ENCODE measurements at regions of chr5 and their contacts with region 1.

Region 1: DNA sequence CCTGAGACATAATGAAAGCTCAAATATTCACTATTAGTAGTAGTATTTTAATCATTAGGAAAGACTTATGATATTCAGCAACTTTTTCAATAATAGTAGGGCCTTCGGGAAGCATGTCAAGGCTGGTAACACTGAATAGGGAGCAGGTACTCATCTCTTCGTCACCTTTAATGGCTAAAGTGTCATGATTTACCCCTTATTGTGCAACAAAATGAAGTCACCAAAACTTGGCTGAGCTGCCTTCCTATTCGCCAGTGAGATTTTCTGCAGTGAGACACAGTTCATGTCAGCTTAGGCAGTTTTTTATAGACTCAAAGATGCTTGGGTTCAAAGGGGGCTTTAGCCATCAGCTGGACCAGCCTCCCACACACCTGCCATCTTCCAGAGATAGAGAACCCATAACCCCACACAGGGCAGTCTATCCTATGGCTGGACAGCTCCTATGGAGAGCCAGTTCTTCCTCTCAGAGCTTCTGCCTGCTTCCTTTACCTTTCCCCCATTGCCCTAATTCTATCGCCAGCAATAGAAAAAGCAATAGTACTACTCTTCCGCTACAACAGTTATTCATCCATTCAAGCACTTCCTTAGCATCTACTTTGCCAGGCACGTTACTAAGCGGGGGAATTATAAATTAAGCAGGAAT is 2.3 kb upstream of the CPLX2 start:
- DNase-seq: no peak
- H3K4me3 ChIP-seq: no peak overlapping the region
- H3K27ac ChIP-seq: no peak overlapping the region
- H3K4me1 ChIP-seq: no peaks in the 10 kb centered on the region
- H3K27me3 ChIP-seq: peaks cover 2 to 54% of the 10 kb centered on the region in 2 donors
- CTCF ChIP-seq: no peak
- POLR2A ChIP-seq: no peak

Region 2: GRCh38 chr5:175889910-175890684 is 21.0 kb after region 1 on chr5:
- intact Hi-C with region 1: loop called (anchors 1 kb)
- DNase-seq: no peak
- H3K4me3 ChIP-seq: no peak overlapping the region
- H3K27ac ChIP-seq: no peak overlapping the region
- H3K4me1 ChIP-seq: no peaks in the 10 kb centered on the region
- H3K27me3 ChIP-seq: no peaks in the 10 kb centered on the region
- CTCF ChIP-seq: no peak
- POLR2A ChIP-seq: no peak

Region 3: DNA sequence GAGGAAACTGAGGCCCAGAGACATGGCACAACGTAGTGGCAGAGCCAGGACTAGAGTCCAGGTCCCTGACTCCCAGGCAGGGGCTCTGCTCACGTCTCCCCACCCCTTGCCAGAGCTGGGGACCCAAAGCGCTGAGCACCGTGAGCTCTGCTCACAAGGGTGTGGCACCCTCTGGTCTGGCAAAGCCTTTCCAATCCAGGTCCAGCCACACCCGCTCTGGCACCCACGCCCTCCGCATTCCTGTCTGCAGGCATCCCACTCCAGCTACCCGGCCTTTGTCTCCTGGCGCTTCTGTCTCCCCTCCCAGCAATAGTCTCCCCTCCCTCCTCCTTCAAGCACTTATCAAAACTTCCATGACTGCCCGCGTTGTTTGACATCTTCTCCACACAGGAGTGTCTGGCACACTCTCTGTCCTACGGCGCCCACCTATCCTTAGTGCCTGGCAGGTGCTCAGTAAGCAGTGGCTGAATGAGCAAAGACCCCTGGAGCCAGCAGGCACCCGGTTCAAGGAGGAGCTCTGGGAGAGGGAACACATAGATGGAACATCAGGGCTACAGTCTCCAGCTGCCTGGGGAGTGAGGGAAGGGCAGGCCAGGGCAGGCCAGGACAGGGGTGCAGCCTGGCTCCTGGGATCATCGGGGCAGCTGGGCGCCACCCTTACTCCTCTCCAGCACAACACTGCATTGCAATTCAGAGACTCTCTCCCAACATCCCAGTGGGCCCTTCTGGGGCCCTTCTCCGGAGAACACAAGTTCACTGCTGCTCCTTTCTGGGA is 531.5 kb after region 1 on chr5:
- intact Hi-C with region 1: no loop called
- DNase-seq: no peak
- H3K4me3 ChIP-seq: no peak overlapping the region
- H3K27ac ChIP-seq: no peak overlapping the region
- H3K4me1 ChIP-seq: no peaks in the 10 kb centered on the region
- H3K27me3 ChIP-seq: no peaks in the 10 kb centered on the region
- CTCF ChIP-seq: no peak
- POLR2A ChIP-seq: no peak

Region 4: DNA sequence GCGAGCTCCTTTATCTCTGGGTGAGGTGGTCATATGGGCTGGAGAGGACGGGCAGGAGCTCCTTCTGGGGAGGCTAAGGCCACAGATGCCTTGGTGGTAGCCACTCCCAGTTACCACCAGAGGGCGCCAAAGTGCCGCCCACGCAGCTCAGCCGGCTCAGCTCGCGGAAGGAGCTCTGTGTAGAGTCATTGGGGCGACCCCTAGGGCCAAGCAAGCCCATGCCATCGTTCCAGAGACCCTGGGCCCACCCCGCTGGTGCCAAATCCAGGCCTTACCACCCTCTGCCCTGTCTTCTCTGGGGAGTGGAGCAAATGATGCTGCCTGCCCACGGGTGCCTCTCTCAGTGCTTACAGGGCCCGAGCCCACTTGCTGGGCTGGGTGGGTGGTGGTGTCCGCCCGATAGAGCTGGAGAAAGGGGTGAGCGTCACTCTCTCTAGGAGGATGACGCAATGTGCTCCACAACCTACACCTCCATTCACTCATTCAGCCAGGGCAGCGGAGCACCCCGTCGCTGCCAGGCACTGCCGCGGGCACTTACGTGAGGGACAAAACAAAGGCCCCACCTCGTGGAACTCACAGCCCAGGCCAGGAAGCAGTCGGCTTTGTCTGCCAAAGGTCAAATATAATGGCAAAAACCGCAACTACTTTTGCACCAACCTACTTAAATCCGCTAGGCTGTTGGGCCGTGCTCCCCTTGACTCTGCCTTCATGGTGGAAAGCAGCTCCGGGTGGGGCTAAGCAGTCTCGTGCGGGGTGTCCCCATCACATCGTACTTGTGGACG is 791.9 kb after region 1 on chr5:
- intact Hi-C with region 1: no loop called
- DNase-seq: peak; percentile 31 to 71
- H3K4me3 ChIP-seq: peak overlapping the region in 1 of 3 donors; percentile 33
- H3K27ac ChIP-seq: no peak overlapping the region
- H3K4me1 ChIP-seq: no peaks in the 10 kb centered on the region
- H3K27me3 ChIP-seq: peaks cover 0 to 24% of the 10 kb centered on the region in 2 donors
- CTCF ChIP-seq: peak; percentile 80 to 82 (median 81)
- POLR2A ChIP-seq: no peak

Region 5: DNA sequence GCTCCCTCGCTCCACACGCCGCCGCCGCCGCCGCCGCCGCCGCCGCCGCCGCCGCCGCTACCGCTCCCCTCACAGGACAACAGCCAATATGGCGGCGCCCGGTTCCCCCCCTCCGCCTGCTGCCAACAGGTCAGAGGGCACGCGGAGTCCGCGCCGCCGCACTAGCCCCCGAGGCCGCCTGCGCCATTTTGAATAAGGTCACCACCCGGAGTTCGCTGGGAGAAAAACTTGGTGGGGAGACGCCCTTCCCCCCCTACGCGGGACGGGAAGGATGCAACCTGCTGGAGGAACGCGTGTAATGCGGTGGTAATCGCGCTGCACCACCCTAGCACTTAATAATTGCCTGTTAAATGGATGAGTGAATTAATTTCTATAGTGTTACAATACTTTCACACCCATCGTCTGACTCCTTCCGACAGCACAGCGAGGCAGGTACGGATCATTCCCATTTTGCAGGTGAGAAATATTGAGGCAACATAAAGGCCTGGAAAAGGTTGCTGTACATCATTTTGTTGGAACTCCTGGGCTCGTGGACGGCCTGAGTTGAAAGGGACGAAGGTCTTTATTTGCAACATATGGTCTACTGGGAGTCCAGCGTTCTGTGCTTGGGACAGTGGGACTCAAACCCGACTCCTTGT is 1685.5 kb after region 1 on chr5 and contains the start of gene FAM193B:
- intact Hi-C with region 1: no loop called
- DNase-seq: peak; percentile 88 to 96
- H3K4me3 ChIP-seq: peak within 1 kb of the TSS; percentile 90 to 93 (median 90)
- H3K27ac ChIP-seq: peak within 1 kb of the TSS; percentile 81 to 95
- H3K4me1 ChIP-seq: no peaks in the 10 kb centered on the region
- H3K27me3 ChIP-seq: no peaks in the 10 kb centered on the region
- CTCF ChIP-seq: peak in 1 of 3 donors; percentile 24
- POLR2A ChIP-seq: no peak
- total RNA-seq, gene FAM193B: 35.4 to 81.5 (median 77.0) TPM

Measured in breast epithelium (tissue), 4 donors.